AG04450 (cell line): ENCODE measurements at regions of chr19 and their contacts with region 1.

Region 1: GRCh38 chr19:56477429-56478338 is 539 bp upstream of the ZNF667 start:
- DNase-seq: peak; percentile 74
- H3K4me3 ChIP-seq: peak overlapping the region; percentile 84
- H3K27ac ChIP-seq: peak overlapping the region; percentile 78
- H3K27me3 ChIP-seq: no peaks in the 10 kb centered on the region
- CTCF ChIP-seq: no peak

Region 2: GRCh38 chr19:56491399-56491798 is 13.7 kb after region 1 on chr19:
- CTCF ChIA-PET with region 1: no interaction called
- POLR2A ChIA-PET with region 1: no interaction called
- DNase-seq: no peak
- H3K4me3 ChIP-seq: no peak overlapping the region
- H3K27ac ChIP-seq: no peak overlapping the region
- H3K27me3 ChIP-seq: no peaks in the 10 kb centered on the region
- CTCF ChIP-seq: no peak

Region 3: DNA sequence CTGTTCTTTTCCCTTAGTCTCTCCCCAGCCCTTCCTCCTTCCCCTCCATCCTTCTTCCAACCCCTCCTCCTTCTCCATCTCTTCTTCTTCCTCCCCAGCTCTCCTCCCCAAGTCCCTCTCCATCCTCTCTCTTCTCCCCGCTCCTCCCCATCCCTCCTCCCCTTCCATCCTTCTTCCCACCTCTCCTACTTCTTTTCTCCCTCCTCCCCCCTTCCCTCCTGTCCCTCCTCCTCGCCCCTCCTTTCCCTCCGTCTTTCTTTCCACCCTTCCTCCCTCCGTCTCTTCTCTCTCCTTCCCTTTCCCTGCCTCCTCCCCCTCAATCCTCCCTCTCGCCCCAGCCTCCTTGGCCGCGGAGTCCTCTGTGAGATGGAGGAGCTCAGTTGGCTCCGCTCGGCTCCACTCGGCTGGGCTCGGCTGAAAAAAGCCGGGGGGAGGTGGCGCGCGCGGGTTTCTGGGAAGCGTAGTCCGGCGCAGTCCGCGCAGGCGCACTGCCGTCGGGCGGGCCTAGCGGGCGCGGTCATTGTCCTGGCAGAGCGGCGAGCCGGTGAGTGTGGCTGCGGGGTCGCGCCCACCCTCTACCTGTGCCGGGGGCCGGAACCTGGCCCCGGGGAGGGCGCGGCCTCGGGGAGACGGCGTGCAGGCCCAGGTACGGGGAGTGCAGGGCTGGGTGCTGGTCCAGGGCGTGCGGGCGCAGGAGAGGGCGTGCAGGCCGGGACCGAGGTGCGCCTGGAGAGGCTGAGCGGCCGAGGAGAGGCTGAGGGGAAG is 117.3 kb after region 1 on chr19 and contains the start of gene ZNF71:
- CTCF ChIA-PET with region 1: no interaction called
- POLR2A ChIA-PET with region 1: interaction called, 11 read pairs
- DNase-seq: peak; percentile 62
- H3K4me3 ChIP-seq: peak within 1 kb of the TSS; percentile 92
- H3K27ac ChIP-seq: no peak within 1 kb of the TSS
- H3K27me3 ChIP-seq: no peaks in the 10 kb centered on the region
- CTCF ChIP-seq: no peak
- polyA plus RNA-seq, gene ZNF71: 4.7 and 6.4 TPM in 2 replicates